Adrenal gland (tissue), 19 donors: ENCODE measurements at regions of chr10 and their contacts with region 1.

Region 1: DNA sequence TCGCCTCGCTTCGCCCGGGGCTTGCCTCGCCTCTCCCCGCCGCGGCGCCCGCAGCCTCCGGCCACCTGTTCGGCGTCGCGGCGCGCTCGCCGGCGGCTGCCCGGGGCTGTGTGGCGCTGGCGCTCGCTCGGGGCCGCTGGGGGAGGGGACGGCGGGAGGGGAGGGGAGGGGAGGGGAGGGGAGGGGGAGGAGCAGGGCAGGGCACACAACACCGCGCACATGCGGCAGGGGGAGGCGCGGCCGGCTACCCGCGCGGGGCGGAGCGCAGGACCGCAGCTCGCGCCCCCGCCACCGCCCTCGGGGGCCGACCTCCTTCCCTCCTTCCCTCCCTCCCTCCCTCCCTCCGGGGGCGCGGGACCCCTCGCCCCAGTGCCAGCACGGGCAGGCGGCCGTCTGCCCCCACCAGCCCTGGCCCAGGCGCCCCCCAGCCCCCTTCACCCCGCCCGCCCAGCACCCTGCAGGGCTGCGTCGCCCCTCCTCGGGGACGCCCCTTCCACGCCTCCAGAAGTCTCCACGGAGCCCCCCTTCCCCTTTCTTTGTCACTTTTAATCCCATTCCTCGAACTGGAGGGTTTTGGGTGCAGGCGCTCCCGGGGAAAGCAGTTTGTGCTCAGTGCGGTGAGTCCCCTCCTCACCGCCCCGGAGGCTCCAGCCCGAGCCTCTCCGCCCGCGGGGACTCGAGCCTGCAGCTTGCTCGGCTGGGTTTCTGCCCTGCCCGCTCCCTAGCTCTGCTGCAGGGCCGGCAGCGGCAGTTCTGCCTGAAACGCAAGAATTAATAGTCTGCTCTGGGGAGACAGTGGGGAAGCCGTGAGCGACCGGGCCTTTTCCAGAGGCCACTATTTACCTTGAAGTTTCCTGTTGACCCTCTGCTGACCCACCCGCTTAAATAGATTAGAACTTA is at the start of gene PARD3:
- DNase-seq: peak; percentile 67 to 81 (median 74)
- H3K4me3 ChIP-seq: peak within 1 kb of the TSS; percentile 53 to 81 (median 70)
- H3K27ac ChIP-seq: peak within 1 kb of the TSS in 4 of 5 donors; percentile 65 to 93 (median 78)
- H3K4me1 ChIP-seq: peaks cover 3 to 40% of the 10 kb centered on the region in 2 donors
- H3K27me3 ChIP-seq: no peaks in the 10 kb centered on the region
- CTCF ChIP-seq: no peak
- POLR2A ChIP-seq: peak in 1 of 2 donors; percentile 23
- total RNA-seq, gene PARD3: 32.8 to 81.1 (median 47.9) TPM

Region 2: DNA sequence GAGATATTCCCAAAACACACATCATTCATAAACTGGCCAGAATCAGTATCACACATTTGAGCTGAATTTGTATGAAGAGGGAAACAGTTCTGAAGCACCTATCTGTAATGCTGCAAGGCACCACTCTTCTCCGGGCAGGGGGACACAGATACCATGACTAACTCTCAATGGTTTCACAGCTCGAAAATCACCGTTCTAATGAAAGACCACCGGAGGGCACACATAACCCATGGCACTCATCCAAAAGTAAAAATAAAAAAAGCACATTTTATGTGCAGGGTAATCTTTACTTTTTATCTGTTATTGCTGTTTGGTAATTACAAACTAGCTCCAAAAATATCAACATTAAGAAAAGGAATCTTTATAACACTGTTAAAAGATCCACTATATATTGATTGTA is 137.8 kb before region 1 on chr10:
- intact Hi-C with region 1: no loop called
- DNase-seq: no peak
- H3K4me3 ChIP-seq: no peak overlapping the region
- H3K27ac ChIP-seq: no peak overlapping the region
- H3K4me1 ChIP-seq: peaks cover 0 to 11% of the 10 kb centered on the region in 2 donors
- H3K27me3 ChIP-seq: no peaks in the 10 kb centered on the region
- CTCF ChIP-seq: no peak
- POLR2A ChIP-seq: no peak

Region 3: GRCh38 chr10:34723750-34724149 is 91.7 kb before region 1 on chr10:
- intact Hi-C with region 1: loop called in 1 of 2 experiments (anchors 10 kb)
- DNase-seq: peak; percentile 40 to 79 (median 56)
- H3K4me3 ChIP-seq: no peak overlapping the region
- H3K27ac ChIP-seq: peak overlapping the region in 1 of 5 donors; percentile 53
- H3K4me1 ChIP-seq: peaks cover 0 to 25% of the 10 kb centered on the region in 2 donors
- H3K27me3 ChIP-seq: no peaks in the 10 kb centered on the region
- CTCF ChIP-seq: peak; percentile 30 to 68 (median 50)
- POLR2A ChIP-seq: no peak